Calu3 (cell line): ENCODE measurements at regions of chr3 and their contacts with region 1.

Region 1: DNA sequence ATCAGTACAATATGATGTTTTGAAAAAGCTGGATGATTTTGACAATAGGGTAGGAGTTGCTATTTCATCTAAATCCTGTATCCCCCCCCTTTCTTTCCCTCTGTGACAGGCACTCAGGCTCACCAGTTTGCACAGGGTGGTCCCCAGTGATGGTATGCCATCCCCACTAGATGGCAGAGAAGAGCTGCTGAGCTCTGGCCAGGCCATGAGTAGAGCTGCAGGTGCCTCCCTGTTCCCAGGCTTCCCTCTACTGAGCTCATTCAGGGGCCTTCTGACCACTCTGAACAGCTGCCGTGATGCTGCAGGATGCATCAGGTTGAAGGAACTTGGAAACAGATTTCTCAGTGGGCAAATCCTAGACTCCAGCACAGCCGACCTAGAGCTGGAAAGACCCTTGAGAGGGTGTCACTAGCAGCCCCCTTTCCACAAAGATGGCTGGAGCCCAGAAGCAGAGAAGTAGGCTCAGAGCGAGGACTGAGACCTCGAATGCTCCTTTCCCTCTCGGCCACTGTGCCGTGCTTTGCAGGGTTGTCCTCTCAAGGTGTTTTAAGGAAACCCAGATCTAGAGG is 45.1 kb downstream of the EFCAB12 start:
- DNase-seq: peak; percentile 83
- H3K4me3 Mint-ChIP-seq: no peak overlapping the region
- H3K27ac Mint-ChIP-seq: no peak overlapping the region
- H3K4me1 Mint-ChIP-seq: no peaks in the 10 kb centered on the region
- H3K27me3 Mint-ChIP-seq: no peaks in the 10 kb centered on the region
- CTCF ChIP-seq: peak; percentile 96

Region 2: DNA sequence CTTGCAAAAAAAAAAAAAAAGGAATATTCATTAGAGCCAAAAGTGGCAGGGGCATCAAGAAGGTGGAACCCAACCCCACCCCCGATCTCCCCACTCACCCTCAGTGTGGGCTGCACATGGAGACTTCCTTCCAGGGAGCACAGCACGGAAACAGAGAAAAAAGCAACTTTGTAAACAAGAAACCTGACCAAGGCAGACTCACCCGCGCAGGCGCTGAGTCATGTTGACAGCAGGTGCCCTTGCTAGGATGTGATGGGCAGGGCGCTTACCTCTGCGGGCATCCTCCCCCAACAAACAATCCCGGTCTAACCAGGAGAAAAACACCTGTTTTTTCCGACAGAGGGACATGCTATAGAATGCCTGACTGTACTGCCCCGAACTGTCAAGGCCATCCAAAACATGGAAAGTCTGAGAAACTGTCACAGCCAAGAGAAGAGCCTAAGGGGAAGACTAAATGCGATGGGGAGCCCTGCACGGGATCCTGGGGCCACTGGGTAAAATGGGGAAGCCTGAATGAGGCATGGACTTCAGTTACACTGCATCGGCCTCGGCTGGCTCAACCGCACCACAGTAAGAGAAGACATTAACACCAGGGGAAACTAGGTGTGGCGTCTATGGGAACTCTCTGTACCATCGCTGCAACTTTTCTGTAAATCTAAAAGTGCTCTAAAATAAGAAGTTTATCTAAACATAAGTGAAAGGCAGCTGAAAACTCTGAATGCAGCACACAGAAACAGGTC is 823.7 kb before region 1 on chr3:
- CTCF ChIA-PET with region 1: no interaction called
- intact Hi-C with region 1: no loop called
- DNase-seq: peak; percentile 67
- H3K4me3 Mint-ChIP-seq: no peak overlapping the region
- H3K27ac Mint-ChIP-seq: no peak overlapping the region
- H3K4me1 Mint-ChIP-seq: peaks cover 9% of the 10 kb centered on the region
- H3K27me3 Mint-ChIP-seq: peaks cover 51% of the 10 kb centered on the region
- CTCF ChIP-seq: no peak

Region 3: DNA sequence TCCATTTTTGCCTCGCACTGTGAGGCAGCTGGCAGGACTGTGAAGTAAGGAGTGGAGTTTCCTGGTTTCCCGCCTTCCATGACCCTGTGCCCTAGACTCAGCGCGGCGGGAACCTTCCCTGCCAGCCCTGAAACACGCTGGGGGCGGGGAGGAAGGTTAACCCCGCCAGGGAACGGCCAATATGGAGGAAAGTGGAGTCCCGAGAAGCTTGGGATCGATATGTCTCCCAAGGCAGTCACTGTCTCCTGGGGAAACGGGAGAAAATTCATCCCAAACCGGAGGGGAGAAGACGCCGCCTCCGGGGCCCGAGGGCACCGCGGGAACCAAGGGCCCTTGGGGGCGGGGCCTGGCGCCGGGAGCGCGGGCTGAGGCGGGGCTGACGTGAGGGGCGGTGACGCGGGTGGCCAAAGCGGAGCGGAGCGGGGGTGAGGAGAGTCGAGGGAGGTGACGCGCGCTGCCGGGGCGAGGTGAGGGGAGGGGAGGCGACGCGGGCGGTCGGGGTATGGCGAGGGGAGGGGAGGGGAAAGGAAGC is 104.9 kb before region 1 on chr3 and contains the start of gene HMCES:
- CTCF ChIA-PET with region 1: no interaction called
- intact Hi-C with region 1: no loop called
- DNase-seq: peak; percentile 99
- H3K4me3 Mint-ChIP-seq: peak within 1 kb of the TSS; percentile 89
- H3K27ac Mint-ChIP-seq: peak within 1 kb of the TSS; percentile 96
- H3K4me1 Mint-ChIP-seq: peaks cover 26% of the 10 kb centered on the region
- H3K27me3 Mint-ChIP-seq: no peaks in the 10 kb centered on the region
- CTCF ChIP-seq: no peak
- total RNA-seq, gene HMCES: 67.1 and 83.6 TPM in 2 replicates

Region 4: GRCh38 chr3:129413687-129414506 is 30.5 kb after region 1 on chr3:
- CTCF ChIA-PET with region 1: interaction called, 20 read pairs
- intact Hi-C with region 1: no loop called
- DNase-seq: peak; percentile 66
- H3K4me3 Mint-ChIP-seq: peak overlapping the region; percentile 17
- H3K27ac Mint-ChIP-seq: peak overlapping the region; percentile 70
- H3K4me1 Mint-ChIP-seq: peaks cover 37% of the 10 kb centered on the region
- H3K27me3 Mint-ChIP-seq: no peaks in the 10 kb centered on the region
- CTCF ChIP-seq: no peak

Region 5: DNA sequence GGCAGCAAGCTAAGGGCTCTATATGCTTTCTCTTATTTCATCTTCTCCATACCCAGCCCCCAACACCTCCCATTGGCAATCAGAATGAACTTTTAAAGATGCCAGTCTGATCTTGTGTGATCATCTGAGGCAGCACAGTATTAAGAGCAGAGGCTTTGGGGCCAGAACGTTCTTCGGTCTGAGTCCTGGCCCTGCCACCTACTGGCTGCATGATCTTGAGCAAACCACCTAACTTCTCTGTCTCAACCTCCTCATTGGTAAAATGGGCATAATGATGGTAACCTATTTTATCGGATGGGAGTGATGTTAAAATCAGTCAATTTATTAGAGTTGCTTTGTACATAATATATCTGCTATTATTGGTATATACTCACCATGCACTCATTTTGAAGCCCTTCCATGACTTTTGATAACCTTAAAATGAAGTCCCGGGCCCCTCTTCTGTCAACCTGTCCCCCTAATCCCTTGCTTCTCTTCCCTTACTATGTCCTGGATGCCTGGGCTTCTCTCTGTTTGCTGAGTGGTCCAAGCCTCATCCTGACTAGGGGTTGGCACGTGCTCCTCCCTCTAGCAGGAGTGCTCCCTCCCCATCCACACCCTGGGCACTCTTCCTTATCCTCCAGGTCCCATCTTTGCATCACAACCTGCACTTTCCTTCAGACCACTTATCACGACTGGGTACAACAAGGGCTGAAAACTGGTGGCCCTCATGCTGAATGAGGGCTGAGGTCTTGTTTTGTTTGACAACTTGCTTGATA is 38.8 kb after region 1 on chr3:
- CTCF ChIA-PET with region 1: interaction called, 9 read pairs
- intact Hi-C with region 1: loop called (anchors 1 kb)
- DNase-seq: no peak
- H3K4me3 Mint-ChIP-seq: no peak overlapping the region
- H3K27ac Mint-ChIP-seq: no peak overlapping the region
- H3K4me1 Mint-ChIP-seq: no peaks in the 10 kb centered on the region
- H3K27me3 Mint-ChIP-seq: peaks cover 19% of the 10 kb centered on the region
- CTCF ChIP-seq: peak; percentile 36

Region 6: GRCh38 chr3:129439817-129440617 is 56.6 kb after region 1 on chr3 and contains the starts of genes IFT122 and MBD4:
- CTCF ChIA-PET with region 1: interaction called, 18 read pairs
- intact Hi-C with region 1: loop called (anchors 5 kb)
- DNase-seq: peak; percentile 100
- H3K4me3 Mint-ChIP-seq: peak within 1 kb of the TSS; percentile 95
- H3K27ac Mint-ChIP-seq: peak within 1 kb of the TSS; percentile 89
- H3K4me1 Mint-ChIP-seq: peaks cover 43% of the 10 kb centered on the region
- H3K27me3 Mint-ChIP-seq: no peaks in the 10 kb centered on the region
- CTCF ChIP-seq: no peak
- total RNA-seq, gene IFT122: 33.5 and 35.5 TPM in 2 replicates
- total RNA-seq, gene MBD4: 49.8 and 52.3 TPM in 2 replicates

Region 7: GRCh38 chr3:129549412-129550204 is 166.2 kb after region 1 on chr3:
- CTCF ChIA-PET with region 1: no interaction called
- intact Hi-C with region 1: no loop called
- DNase-seq: no peak
- H3K4me3 Mint-ChIP-seq: no peak overlapping the region
- H3K27ac Mint-ChIP-seq: no peak overlapping the region
- H3K4me1 Mint-ChIP-seq: no peaks in the 10 kb centered on the region
- H3K27me3 Mint-ChIP-seq: peaks cover 40% of the 10 kb centered on the region
- CTCF ChIP-seq: no peak

Region 8: DNA sequence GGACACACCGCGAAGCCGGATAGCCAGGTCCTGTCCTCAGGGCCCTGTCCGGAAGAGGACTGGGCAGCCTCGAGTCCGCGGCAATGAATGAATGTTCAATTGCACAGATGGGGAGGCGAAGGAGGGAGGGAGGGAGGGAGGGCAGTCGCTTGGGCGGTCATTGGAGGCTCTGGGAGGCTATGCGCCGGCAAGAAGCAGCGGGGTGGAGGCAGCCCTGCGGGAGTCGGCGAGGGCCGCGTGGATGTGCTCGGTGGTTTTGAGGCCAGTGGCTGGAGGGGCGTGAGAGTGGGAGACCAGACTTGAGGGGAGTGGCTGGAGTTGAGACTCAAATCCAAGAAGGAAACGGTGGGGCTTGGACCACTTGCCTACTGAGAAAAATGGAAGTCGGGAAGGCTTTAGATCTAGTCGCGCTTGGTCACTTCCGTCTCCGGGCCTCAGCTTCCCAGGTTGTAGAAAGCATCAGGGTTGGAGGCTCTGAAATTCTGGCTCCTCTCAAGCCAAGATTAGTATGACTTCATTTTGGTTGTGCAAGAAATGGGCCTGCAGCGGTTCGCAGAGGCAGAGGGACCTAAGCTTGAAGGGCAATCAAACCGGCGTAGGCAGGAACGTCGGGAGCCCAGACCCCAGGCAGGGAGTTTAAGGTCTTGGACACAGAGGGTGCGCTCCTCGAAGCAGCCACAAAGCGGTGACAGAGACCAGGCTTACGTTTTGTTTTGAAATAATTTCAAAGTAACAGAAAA is 244.2 kb after region 1 on chr3:
- CTCF ChIA-PET with region 1: interaction called, 10 read pairs
- intact Hi-C with region 1: no loop called
- DNase-seq: peak; percentile 86
- H3K4me3 Mint-ChIP-seq: peak overlapping the region; percentile 71
- H3K27ac Mint-ChIP-seq: peak overlapping the region; percentile 57
- H3K4me1 Mint-ChIP-seq: peaks cover 24% of the 10 kb centered on the region
- H3K27me3 Mint-ChIP-seq: no peaks in the 10 kb centered on the region
- CTCF ChIP-seq: peak; percentile 92

Region 9: GRCh38 chr3:129824926-129825541 is 441.7 kb after region 1 on chr3:
- CTCF ChIA-PET with region 1: interaction called, 8 read pairs
- intact Hi-C with region 1: loop called (anchors 2 kb)
- DNase-seq: peak; percentile 88
- H3K4me3 Mint-ChIP-seq: no peak overlapping the region
- H3K27ac Mint-ChIP-seq: peak overlapping the region; percentile 5
- H3K4me1 Mint-ChIP-seq: peaks cover 39% of the 10 kb centered on the region
- H3K27me3 Mint-ChIP-seq: no peaks in the 10 kb centered on the region
- CTCF ChIP-seq: peak; percentile 90

Region 10: DNA sequence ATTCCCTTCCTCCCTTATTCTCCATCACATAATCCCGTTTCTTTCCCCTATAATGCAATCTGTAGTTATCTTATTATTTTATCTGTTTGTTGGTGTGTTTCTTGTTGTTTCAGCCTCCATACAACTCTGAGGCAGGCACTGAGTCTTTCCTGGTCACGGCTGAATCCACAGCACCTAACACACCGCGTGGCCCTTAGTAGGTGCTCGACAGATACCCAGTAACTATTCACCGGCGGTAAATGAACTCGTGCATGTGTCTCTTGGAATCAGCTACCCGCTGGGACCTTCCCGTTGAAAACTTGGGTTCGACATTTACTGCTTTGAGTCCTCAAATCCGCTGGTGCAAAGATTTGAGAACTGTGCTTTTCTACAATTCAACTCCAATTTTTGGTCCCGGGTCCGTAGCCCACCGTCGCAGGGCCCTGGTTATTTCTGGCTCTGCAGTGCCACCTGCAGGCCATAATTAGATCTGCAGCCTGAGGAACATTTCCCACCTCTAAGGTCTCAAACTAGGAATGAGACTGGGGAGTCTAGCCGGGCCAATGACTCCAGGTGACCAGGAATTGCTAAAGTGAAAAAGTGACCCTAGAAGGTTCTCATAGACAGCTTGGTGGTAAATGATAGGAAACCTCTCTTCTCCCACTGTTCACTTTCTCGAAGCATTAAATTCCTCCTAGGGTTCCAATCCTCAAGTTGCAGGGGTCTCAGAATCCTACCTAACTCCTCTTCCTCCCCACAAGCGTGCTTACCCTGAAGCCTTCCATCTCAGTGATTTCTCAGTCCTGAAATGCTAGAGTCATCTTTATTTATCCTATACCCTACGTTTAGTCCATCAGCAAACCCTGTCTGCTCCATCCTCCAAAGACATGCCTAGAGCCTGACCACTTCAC is 551.1 kb after region 1 on chr3:
- CTCF ChIA-PET with region 1: no interaction called
- intact Hi-C with region 1: loop called (anchors 5 kb)
- DNase-seq: peak; percentile 49
- H3K4me3 Mint-ChIP-seq: peak overlapping the region; percentile 47
- H3K27ac Mint-ChIP-seq: no peak overlapping the region
- H3K4me1 Mint-ChIP-seq: peaks cover 16% of the 10 kb centered on the region
- H3K27me3 Mint-ChIP-seq: no peaks in the 10 kb centered on the region
- CTCF ChIP-seq: peak; percentile 98